MCF 10A (cell line): ENCODE measurements at regions of chr3 and their contacts with region 1.

Region 1: GRCh38 chr3:52685709-52686691 is at the starts of genes GNL3 and PBRM1:
- DNase-seq: peak; percentile 95
- H3K4me3 Mint-ChIP-seq: peak within 1 kb of the TSS; percentile 99
- H3K27ac Mint-ChIP-seq: peak within 1 kb of the TSS; percentile 99
- H3K4me1 Mint-ChIP-seq: peaks cover 28% of the 10 kb centered on the region
- H3K27me3 Mint-ChIP-seq: no peaks in the 10 kb centered on the region
- CTCF ChIP-seq: no peak
- total RNA-seq, gene GNL3: 163 and 200 TPM in 2 replicates
- total RNA-seq, gene PBRM1: 49.3 and 56.9 TPM in 2 replicates

Region 2: DNA sequence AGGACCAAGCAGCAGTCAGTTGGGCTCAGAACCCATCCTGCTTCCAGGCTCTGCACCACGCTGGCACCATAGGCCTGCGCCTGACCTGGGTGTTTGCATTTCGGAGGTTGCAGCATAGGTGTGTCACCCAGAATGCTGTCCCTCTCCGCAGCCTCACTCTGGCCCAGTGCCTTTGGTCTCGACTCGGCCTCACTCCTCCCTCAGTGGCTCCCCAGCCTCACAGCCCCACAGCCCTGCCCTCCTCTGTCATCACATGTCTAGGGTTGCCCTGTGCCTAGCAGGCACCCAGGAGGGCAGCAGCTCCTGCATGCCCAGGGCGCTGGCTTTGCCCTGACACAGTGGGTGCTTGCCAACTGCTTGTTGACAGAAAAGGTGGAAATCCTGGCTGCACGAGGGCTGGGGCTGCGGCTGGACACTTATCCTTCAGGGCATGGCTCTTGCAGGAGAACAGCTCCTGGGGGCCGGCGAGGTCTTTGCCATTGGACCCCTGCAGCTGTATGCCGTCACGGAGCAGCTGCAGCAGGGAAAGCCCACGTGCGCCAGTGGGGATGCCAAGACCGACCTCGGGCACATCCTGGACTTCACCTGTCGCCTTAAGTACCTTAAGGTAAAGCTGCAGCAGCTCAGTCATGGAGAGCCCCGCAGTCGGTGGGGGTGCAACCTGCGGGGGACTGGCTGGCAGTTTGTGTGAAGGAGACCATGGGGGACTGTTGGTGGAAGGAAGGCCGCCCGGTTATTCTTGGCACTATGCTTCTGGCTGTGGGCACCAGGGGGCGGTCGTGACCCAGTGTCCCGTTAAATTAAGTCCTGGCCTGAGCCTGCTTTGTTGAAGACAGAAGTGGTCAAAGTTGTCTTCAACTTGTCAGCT is 214.4 kb before region 1 on chr3:
- CTCF ChIA-PET with region 1: no interaction called
- POLR2A ChIA-PET with region 1: no interaction called
- intact Hi-C with region 1: loop called (anchors 1 kb)
- DNase-seq: peak; percentile 67
- H3K4me3 Mint-ChIP-seq: no peak overlapping the region
- H3K27ac Mint-ChIP-seq: no peak overlapping the region
- H3K4me1 Mint-ChIP-seq: no peaks in the 10 kb centered on the region
- H3K27me3 Mint-ChIP-seq: no peaks in the 10 kb centered on the region
- CTCF ChIP-seq: peak; percentile 69

Region 3: DNA sequence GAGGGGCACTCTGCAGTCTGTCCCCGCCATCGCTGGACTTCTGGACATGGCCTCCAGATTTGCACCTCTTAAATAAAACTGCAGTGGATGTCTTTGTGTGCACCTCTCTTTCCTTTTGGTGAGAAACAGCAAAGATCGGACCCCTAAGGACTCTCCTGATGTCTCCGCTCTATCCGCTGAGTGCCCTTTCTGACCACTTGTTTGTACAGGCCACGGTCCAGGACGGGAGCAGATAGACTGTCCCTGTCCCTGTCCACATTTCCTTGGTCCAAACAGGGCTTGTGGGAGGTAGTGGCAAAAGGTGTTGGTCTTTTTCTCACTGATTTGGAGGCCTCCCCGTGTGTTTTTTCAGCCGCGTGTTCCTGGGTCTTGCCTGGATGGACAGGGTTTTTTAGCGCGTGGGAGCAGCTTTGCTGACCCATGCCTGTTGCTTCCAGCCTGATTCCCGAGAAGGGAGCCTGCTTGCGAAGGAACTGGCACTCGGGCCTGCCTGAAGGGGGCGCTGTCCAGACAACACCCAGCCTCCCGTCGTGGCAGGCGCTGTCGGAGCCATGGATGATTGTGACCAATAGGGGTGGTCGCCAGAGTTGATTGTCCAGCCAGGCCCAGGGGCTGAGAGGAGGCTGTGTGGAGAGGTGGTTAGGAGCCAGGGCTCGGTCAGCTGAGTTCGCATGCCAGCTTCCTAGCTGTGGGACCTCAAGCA is 204.0 kb before region 1 on chr3:
- CTCF ChIA-PET with region 1: no interaction called
- POLR2A ChIA-PET with region 1: no interaction called
- intact Hi-C with region 1: no loop called
- DNase-seq: no peak
- H3K4me3 Mint-ChIP-seq: no peak overlapping the region
- H3K27ac Mint-ChIP-seq: no peak overlapping the region
- H3K4me1 Mint-ChIP-seq: no peaks in the 10 kb centered on the region
- H3K27me3 Mint-ChIP-seq: no peaks in the 10 kb centered on the region
- CTCF ChIP-seq: peak; percentile 34

Region 4: DNA sequence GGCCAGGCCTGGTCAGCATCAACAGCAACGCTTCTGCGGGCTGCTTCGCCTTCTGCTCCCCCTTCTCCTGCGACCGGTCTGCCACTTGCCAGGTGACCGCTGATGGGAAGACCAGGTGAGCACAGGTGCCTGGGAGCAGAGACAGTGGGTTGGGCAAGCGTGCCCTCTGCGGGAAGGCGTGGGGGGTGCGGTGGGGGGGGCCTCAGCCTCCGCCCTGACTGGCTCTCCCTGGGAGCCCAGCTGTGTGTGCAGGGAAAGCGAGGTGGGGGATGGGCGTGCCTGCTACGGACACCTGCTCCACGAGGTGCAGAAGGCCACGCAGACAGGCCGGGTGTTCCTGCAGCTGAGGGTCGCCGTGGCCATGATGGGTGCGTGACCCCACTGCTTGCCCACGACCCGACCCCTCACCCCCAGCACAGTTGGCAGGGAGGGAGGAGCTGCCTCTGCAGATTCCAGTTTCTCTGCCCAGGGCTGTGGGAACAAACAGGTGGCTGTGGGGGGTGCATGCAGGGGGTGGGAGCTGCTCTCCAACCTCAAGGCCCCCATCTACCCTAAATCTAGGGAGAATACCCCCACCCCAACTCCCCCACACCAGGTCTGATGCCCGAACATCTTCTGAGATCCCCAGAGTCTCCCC is 182.1 kb before region 1 on chr3:
- CTCF ChIA-PET with region 1: no interaction called
- POLR2A ChIA-PET with region 1: no interaction called
- intact Hi-C with region 1: no loop called
- DNase-seq: no peak
- H3K4me3 Mint-ChIP-seq: no peak overlapping the region
- H3K27ac Mint-ChIP-seq: no peak overlapping the region
- H3K4me1 Mint-ChIP-seq: peaks cover 7% of the 10 kb centered on the region
- H3K27me3 Mint-ChIP-seq: no peaks in the 10 kb centered on the region
- CTCF ChIP-seq: no peak

Region 5: GRCh38 chr3:52636673-52637072 is 49.3 kb before region 1 on chr3:
- CTCF ChIA-PET with region 1: no interaction called
- POLR2A ChIA-PET with region 1: interaction called, 3 read pairs
- intact Hi-C with region 1: loop called (anchors 1 kb)
- DNase-seq: peak; percentile 78
- H3K4me3 Mint-ChIP-seq: no peak overlapping the region
- H3K27ac Mint-ChIP-seq: no peak overlapping the region
- H3K4me1 Mint-ChIP-seq: peaks cover 5% of the 10 kb centered on the region
- H3K27me3 Mint-ChIP-seq: no peaks in the 10 kb centered on the region
- CTCF ChIP-seq: no peak

Region 6: DNA sequence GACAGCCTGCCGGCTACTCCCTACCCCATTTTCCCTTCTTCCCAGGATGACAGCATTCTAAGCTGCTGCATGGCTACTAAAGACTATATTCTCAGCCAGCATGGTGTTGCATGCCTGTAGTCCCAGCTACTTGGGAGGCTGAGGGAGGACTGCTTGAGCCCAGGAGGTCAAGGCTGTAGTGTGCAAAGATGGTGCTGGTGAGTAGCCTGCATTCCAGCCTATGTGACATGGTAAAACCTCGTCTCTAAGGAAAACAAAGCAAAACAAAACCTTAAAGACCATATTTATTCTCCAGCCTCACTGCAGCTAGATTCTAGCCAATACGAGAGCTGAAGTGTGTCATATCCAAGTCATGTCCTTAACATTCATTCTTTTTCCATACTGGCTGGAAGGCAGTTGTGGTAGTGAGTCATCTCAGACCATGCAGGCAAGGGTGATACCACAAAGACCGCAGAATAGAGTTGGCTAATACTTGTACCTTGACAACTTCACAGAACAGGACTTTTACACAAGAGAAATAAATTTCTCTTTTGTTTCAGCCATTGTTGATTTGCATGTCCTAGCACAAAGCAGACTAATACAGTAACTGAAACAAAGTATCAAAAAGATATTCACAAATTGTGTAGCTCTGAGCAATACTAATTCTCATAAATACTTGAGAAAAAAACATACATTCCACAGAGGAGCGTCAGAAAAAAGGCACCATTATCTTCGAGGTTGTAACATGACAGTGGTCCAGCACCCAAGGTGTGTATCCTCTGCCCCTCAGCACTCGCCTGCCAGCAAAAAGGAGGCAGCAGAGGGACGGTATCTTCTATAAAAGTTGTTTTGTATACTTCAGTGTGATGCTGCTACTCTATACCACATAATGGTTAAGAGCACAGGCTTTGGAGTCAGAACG is 15.1 kb before region 1 on chr3:
- CTCF ChIA-PET with region 1: interaction called, 4 read pairs
- POLR2A ChIA-PET with region 1: interaction called, 104 read pairs
- intact Hi-C with region 1: loop called (anchors 2 kb)
- DNase-seq: peak; percentile 98
- H3K4me3 Mint-ChIP-seq: peak overlapping the region; percentile 72
- H3K27ac Mint-ChIP-seq: peak overlapping the region; percentile 96
- H3K4me1 Mint-ChIP-seq: peaks cover 28% of the 10 kb centered on the region
- H3K27me3 Mint-ChIP-seq: no peaks in the 10 kb centered on the region
- CTCF ChIP-seq: no peak

Region 7: DNA sequence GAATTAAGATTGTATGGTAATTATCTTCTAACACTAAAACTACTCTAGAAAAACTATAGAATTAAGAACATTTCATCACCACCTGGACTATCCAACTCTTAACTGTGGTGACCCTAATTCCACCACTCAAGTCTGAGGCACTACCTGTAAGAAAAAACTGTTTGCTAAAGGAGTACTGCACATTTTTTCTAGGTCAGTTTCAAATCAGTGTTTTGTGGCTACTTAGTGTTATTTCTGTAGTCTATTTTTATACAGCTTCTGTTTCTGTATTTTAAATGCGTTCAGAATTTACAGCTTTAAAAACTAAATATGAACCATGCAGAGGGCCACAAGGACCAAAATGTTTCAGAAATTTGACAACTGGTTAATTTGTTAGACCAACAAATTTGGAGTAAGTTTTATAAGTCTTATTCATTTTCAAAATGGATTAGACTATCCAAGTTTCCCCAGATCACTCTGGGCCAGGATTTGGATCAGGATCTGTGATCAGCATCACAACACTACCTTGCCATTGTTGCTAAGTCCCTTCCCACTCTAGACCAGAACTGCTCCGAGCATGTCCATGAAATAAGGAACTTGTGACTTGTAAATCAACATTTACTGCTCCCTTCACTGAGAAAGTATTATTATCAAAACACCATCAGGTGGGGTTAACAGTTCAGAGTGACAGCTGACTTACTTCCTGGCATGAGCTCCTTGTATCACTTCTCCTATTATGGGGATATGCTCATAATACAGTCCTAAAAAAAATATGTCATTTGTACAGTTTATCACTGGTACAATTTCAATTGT is 11.0 kb after region 1 on chr3:
- CTCF ChIA-PET with region 1: no interaction called
- POLR2A ChIA-PET with region 1: interaction called, 75 read pairs
- intact Hi-C with region 1: no loop called
- DNase-seq: no peak
- H3K4me3 Mint-ChIP-seq: no peak overlapping the region
- H3K27ac Mint-ChIP-seq: no peak overlapping the region
- H3K4me1 Mint-ChIP-seq: peaks cover 5% of the 10 kb centered on the region
- H3K27me3 Mint-ChIP-seq: no peaks in the 10 kb centered on the region
- CTCF ChIP-seq: no peak

Region 8: DNA sequence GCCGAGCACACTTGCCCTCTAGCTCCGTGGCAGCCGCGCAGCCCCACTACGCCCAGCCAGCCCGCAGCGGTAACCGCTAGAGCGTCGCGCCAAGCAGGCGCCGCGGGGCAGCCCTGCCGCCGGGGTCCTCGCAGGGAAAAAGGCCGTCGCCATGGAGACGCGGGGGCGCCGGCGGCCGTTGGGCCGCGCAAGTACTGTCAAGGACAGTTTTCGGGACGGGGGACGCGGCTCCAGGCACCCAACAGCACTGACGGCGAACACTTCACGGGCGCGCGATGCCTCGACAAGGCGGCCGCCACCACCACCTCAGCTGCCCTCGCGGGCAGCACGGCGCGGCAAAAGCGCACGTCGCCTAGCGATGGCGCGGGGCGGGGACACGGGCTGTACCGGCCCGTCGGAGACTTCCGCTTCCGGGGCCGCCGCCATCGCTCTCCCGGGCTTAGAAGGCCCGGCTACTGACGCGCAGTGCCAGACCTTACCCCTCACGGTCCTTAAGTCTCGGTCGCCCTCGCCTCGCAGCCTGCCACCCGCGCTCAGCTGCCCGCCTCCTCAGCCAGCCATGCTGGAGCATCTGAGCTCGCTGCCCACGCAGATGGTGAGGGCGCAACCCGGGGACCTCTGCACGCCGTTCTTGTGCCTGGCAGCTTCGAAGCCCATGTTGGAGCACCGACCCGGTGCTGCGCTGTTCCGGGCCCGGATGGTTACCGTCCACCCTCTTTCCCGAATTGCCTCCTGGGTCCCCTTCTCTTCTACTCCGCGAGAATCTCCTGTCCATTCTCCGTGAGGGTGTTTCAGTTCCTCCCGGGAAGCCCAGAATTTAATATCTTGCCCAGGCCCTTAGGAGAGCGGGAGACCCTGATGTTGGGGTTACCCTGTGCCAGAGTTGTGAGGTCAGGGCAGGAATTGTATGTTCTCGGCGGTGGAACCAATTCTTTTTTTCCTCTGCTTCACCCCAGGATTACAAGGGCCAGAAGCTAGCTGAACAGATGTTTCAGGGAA is 20.0 kb after region 1 on chr3 and contains the starts of genes GLT8D1 and SPCS1:
- CTCF ChIA-PET with region 1: interaction called, 6 read pairs
- POLR2A ChIA-PET with region 1: interaction called, 92 read pairs
- intact Hi-C with region 1: no loop called
- DNase-seq: peak; percentile 84
- H3K4me3 Mint-ChIP-seq: peak within 1 kb of the TSS; percentile 95
- H3K27ac Mint-ChIP-seq: peak within 1 kb of the TSS; percentile 93
- H3K4me1 Mint-ChIP-seq: peaks cover 7% of the 10 kb centered on the region
- H3K27me3 Mint-ChIP-seq: no peaks in the 10 kb centered on the region
- CTCF ChIP-seq: no peak
- total RNA-seq, gene GLT8D1: 42.2 and 48.1 TPM in 2 replicates
- total RNA-seq, gene SPCS1: 135 and 172 TPM in 2 replicates